Left ventricle myocardium superior (tissue), 1 donor: ENCODE measurements at regions of chr11 and their contacts with region 1.

Region 1: GRCh38 chr11:7098235-7098832 is 9.5 kb downstream of the RBMXL2 start:
- DNase-seq: no peak
- ATAC-seq: peak; percentile 47

Region 2: GRCh38 chr11:7442588-7443215 is 344.4 kb after region 1 on chr11:
- intact Hi-C with region 1: loop called (anchors 5 kb)
- DNase-seq: peak; percentile 79
- ATAC-seq: peak; percentile 73

Region 3: GRCh38 chr11:7688238-7688826 is 590.0 kb after region 1 on chr11:
- intact Hi-C with region 1: loop called (anchors 5 kb)
- DNase-seq: no peak
- ATAC-seq: no peak